ENCODE measurements at regions of chr2 and their contacts with region 1.

Region 1: GRCh38 chr2:162007447-162008040 is 66.5 kb downstream of the DPP4 start:
- DNase-seq: peak in 2 of 9 experiments; percentile 41 to 52
- ATAC-seq: no peak
- H3K4me3 ChIP-seq: no peak overlapping the region
- H3K4me3 Mint-ChIP-seq: no peak overlapping the region
- H3K27ac ChIP-seq: no peak overlapping the region
- H3K27ac Mint-ChIP-seq: no peak overlapping the region
- H3K4me1 ChIP-seq: peaks cover 27% of the 10 kb centered on the region
- H3K4me1 Mint-ChIP-seq: peaks cover 44% of the 10 kb centered on the region
- H3K27me3 ChIP-seq: no peaks in the 10 kb centered on the region
- H3K27me3 Mint-ChIP-seq: no peaks in the 10 kb centered on the region
- CTCF ChIP-seq: peak; percentile 98

Region 2: GRCh38 chr2:161586517-161587167 is 420.9 kb before region 1 on chr2:
- CTCF ChIA-PET with region 1: interaction called, 3 read pairs
- POLR2A ChIA-PET with region 1: no interaction called
- intact Hi-C with region 1: loop called in 1 of 2 experiments (anchors 2 kb)
- DNase-seq: peak in 2 of 9 experiments; percentile 30 to 42
- ATAC-seq: peak; percentile 38
- H3K4me3 ChIP-seq: no peak overlapping the region
- H3K4me3 Mint-ChIP-seq: no peak overlapping the region
- H3K27ac ChIP-seq: no peak overlapping the region
- H3K27ac Mint-ChIP-seq: no peak overlapping the region
- H3K4me1 ChIP-seq: no peaks in the 10 kb centered on the region
- H3K4me1 Mint-ChIP-seq: no peaks in the 10 kb centered on the region
- H3K27me3 ChIP-seq: no peaks in the 10 kb centered on the region
- H3K27me3 Mint-ChIP-seq: no peaks in the 10 kb centered on the region
- CTCF ChIP-seq: peak; percentile 81

Region 3: GRCh38 chr2:161992526-161992925 is 15.0 kb before region 1 on chr2:
- CTCF ChIA-PET with region 1: interaction called, 17 read pairs
- POLR2A ChIA-PET with region 1: interaction called, 6 read pairs
- intact Hi-C with region 1: loop called in 1 of 2 experiments (anchors 1 kb)
- DNase-seq: peak; percentile 12 to 69 (median 48)
- ATAC-seq: peak; percentile 76
- H3K4me3 ChIP-seq: peak overlapping the region; percentile 7 to 34
- H3K4me3 Mint-ChIP-seq: peak overlapping the region; percentile 87
- H3K27ac ChIP-seq: peak overlapping the region; percentile 44 to 70
- H3K27ac Mint-ChIP-seq: peak overlapping the region; percentile 98
- H3K4me1 ChIP-seq: peaks cover 49% of the 10 kb centered on the region
- H3K4me1 Mint-ChIP-seq: peaks cover 56% of the 10 kb centered on the region
- H3K27me3 ChIP-seq: no peaks in the 10 kb centered on the region
- H3K27me3 Mint-ChIP-seq: no peaks in the 10 kb centered on the region
- CTCF ChIP-seq: no peak

Region 4: DNA sequence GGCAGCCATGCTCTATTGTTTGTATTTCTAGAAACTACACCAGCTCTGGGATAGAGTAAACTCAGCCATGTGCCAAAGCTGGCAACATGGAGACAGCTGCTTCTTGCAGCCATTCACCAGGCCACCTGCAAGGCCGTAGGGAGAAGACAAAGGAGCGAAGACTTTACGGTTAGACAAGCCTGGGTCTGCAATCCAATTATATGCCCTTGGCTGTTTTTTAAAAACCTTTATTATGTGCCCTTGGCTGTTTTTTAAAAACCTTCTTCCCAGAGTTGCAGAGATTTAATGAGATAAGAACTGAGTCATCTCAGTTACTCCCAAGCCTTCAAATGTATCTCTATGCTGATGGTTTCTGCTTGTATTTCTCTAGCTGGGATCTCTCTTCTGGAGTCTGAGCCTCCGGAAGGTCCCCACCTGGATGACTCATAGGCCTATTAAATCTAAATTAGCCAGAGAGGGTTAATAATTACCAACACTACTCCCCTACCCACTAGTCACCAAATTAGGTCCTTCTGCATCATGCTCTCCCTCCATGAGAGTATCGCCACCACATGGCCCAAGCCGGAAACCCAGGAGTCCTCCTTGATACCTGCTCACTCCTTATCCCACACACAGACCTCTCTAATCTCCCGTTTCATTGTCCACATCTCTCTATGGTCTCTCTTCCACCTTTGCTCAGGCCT is 83.9 kb after region 1 on chr2:
- CTCF ChIA-PET with region 1: interaction called, 3 read pairs
- POLR2A ChIA-PET with region 1: no interaction called
- intact Hi-C with region 1: loop called in 1 of 2 experiments (anchors 1 kb)
- DNase-seq: peak in 3 of 9 experiments; percentile 7 to 21 (median 18)
- ATAC-seq: no peak
- H3K4me3 ChIP-seq: no peak overlapping the region
- H3K4me3 Mint-ChIP-seq: no peak overlapping the region
- H3K27ac ChIP-seq: no peak overlapping the region
- H3K27ac Mint-ChIP-seq: no peak overlapping the region
- H3K4me1 ChIP-seq: no peaks in the 10 kb centered on the region
- H3K4me1 Mint-ChIP-seq: no peaks in the 10 kb centered on the region
- H3K27me3 ChIP-seq: no peaks in the 10 kb centered on the region
- H3K27me3 Mint-ChIP-seq: no peaks in the 10 kb centered on the region
- CTCF ChIP-seq: no peak

Region 5: DNA sequence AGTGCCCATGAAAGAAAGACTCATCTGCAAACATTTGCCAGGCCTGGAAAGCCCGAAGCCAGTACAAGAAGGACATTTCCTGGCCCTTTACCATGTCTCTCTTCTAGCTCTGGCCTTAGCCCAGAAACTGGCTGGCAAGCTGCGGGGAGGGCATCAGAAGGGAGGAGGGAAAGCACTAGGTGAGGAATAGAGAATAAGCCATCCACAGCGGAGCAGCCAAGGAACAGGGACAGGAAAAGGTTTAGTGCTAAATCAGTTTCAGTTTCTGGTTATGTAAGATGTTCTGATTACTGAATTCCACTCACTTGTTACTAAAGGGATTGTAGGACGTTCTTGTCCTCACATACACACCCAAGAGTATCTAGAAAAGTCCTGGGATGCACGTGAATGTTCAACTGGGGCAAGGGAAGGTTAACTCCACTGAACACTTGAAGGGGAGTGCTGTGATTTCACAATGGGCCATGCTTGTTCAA is 111.1 kb after region 1 on chr2:
- CTCF ChIA-PET with region 1: interaction called, 10 read pairs
- POLR2A ChIA-PET with region 1: no interaction called
- intact Hi-C with region 1: loop called (anchors 1 to 2 kb)
- DNase-seq: no peak
- ATAC-seq: no peak
- H3K4me3 ChIP-seq: no peak overlapping the region
- H3K4me3 Mint-ChIP-seq: no peak overlapping the region
- H3K27ac ChIP-seq: no peak overlapping the region
- H3K27ac Mint-ChIP-seq: no peak overlapping the region
- H3K4me1 ChIP-seq: no peaks in the 10 kb centered on the region
- H3K4me1 Mint-ChIP-seq: peaks cover 5% of the 10 kb centered on the region
- H3K27me3 ChIP-seq: no peaks in the 10 kb centered on the region
- H3K27me3 Mint-ChIP-seq: no peaks in the 10 kb centered on the region
- CTCF ChIP-seq: no peak